Activated CD4-positive, alpha-beta T cell treated with anti-CD3 and anti-CD28 coated beads, Interleukin-2, amount 10 ng/mL, durations not matched to agents 24 days and 14 days (primary cell): ENCODE measurements at regions of chr1 and their contacts with region 1.

Region 1: DNA sequence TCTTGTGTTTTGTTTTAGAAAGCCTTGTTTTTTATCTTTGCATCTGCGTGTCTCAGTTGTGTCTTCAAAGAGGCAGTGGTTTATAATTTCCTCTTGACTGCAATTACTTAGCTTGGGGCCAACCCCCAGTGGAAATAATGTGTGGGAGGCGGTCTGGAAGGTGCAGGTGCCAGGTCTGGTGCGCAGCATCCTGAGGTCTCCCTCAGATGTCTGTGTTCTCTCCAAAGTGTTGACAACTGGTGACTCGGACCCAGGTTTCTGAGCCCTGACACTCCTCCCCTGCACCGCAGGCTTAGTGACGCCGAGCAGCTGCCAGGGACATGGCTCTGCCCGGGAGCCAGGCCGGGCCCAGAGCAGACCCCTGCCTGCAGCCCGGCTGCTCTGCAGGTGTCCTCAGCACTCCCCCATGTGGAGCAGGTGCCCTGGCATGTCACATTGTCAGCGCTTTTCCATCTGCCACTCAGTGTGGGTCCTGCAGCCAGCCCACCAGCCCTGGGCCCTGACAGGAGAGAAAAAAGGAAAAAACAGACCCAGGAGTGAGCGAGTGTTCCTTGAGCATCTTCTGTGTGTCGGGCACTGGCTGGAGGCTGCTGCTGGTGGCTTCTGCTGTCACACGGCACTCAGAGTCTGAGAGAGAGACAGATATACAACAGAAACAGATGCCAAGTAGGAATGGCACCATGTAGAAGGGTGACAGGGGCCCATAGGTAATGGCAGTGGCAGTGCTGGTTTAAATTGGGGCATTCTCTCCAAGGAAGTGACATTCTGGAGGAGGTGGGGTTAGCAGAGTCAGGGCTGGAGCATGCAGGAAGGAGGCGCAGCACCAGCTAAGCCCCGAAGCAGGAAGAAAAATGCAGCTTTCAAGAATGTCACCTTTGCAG is 24.8 kb upstream of the SELENON start:
- DNase-seq: peak; percentile 94
- H3K4me3 Mint-ChIP-seq: peak overlapping the region; percentile 67
- H3K27ac Mint-ChIP-seq: peak overlapping the region; percentile 59
- H3K4me1 Mint-ChIP-seq: peaks cover 26% of the 10 kb centered on the region
- H3K27me3 Mint-ChIP-seq: peaks cover 53% of the 10 kb centered on the region

Region 2: GRCh38 chr1:25616095-25616986 is 158.8 kb before region 1 on chr1 and contains the start of gene MAN1C1:
- intact Hi-C with region 1: loop called (anchors 2 kb)
- DNase-seq: peak; percentile 95
- H3K4me3 Mint-ChIP-seq: peak within 1 kb of the TSS; percentile 91
- H3K27ac Mint-ChIP-seq: peak within 1 kb of the TSS; percentile 47
- H3K4me1 Mint-ChIP-seq: peaks cover 54% of the 10 kb centered on the region
- H3K27me3 Mint-ChIP-seq: peaks cover 65% of the 10 kb centered on the region
- total RNA-seq, gene MAN1C1: 2.2 and 2.9 TPM in 2 replicates

Region 3: GRCh38 chr1:25729751-25730644 is 45.2 kb before region 1 on chr1:
- intact Hi-C with region 1: loop called (anchors 2 kb)
- DNase-seq: no peak
- H3K4me3 Mint-ChIP-seq: no peak overlapping the region
- H3K27ac Mint-ChIP-seq: no peak overlapping the region
- H3K4me1 Mint-ChIP-seq: peaks cover 18% of the 10 kb centered on the region
- H3K27me3 Mint-ChIP-seq: peaks cover 58% of the 10 kb centered on the region

Region 4: DNA sequence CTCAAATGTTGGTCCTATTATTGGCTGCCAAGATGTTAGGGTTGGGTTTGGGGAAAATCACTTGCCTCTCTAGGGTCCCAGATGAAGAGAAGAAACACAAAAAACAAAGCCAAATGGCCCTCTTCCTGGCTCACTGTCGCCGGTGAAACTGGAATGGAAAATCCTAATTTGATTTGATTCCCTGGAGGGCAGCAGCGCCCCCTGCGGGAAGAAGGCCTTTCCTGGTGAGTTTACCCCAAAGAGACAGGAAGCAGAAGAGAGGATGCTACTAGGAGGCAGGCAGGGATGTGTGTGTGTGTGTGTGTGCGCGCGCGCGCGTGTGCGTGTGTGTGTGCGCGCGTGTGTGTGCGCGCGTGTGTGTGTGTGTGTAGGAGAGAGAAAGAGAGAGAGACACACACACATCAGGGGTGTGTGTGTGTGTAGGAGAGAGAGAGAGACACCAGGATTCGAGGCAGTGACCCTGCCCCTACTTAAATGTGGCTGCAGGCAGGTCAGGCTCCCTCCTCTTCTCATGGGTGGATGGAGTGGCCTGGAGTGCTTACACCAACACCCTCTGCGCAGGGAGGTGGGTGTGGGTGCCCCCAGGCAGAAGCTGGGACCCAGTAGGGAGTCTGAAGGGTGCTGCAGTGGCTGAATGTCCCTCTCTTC is 21.8 kb after region 1 on chr1:
- intact Hi-C with region 1: loop called (anchors 2 kb)
- DNase-seq: peak; percentile 94
- H3K4me3 Mint-ChIP-seq: peak overlapping the region; percentile 11
- H3K27ac Mint-ChIP-seq: peak overlapping the region; percentile 48
- H3K4me1 Mint-ChIP-seq: peaks cover 25% of the 10 kb centered on the region
- H3K27me3 Mint-ChIP-seq: peaks cover 32% of the 10 kb centered on the region

Region 5: DNA sequence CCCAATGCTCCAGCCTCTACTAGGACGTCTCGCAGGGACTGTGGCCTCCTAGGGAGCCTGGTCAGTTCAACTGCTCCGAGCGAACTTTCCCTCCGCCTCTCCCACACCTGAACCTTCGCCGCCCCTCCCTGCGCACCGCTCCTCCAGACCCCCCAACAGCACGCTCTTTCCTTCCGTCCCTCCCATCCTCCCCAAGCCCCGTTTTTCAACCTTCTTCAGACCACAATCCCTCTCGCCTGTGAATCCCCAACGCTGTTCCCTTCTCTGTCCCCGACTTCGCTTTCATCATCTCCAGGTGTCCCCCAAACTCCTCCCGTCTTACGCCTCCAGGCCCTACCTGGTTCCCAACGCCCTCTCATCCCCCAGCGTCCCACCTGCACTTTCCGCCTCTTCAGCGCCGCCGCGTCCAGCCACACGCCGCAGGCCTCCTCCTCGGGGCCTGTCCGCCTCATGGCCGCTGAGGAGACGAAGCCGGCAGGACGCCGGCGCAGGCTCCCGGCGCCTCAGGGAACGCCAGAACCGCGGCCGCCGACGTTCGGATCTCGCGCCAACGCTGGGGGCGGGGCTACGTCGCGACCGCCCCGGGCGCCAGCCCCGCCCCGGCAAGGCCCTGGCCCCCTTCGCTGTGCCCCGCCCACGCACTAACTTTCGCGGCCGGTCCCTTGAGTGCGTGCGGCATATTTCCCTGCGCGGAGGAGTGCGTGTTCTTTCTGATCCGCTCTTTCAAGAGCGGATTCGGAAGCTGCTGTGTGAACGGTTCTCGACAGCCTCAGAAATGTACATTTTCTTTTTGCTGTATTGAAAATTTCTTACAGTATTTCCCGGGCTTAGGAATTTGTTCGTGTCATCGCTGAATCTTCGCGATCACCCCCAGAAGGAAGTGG is 84.0 kb after region 1 on chr1 and contains the start of gene AUNIP:
- intact Hi-C with region 1: no loop called
- DNase-seq: peak; percentile 98
- H3K4me3 Mint-ChIP-seq: peak within 1 kb of the TSS; percentile 97
- H3K27ac Mint-ChIP-seq: peak within 1 kb of the TSS; percentile 96
- H3K4me1 Mint-ChIP-seq: peaks cover 27% of the 10 kb centered on the region
- H3K27me3 Mint-ChIP-seq: no peaks in the 10 kb centered on the region
- total RNA-seq, gene AUNIP: 12.0 and 13.9 TPM in 2 replicates